Endothelial cell of umbilical vein (primary cell): ENCODE measurements at regions of chr1 and their contacts with region 1.

Region 1: DNA sequence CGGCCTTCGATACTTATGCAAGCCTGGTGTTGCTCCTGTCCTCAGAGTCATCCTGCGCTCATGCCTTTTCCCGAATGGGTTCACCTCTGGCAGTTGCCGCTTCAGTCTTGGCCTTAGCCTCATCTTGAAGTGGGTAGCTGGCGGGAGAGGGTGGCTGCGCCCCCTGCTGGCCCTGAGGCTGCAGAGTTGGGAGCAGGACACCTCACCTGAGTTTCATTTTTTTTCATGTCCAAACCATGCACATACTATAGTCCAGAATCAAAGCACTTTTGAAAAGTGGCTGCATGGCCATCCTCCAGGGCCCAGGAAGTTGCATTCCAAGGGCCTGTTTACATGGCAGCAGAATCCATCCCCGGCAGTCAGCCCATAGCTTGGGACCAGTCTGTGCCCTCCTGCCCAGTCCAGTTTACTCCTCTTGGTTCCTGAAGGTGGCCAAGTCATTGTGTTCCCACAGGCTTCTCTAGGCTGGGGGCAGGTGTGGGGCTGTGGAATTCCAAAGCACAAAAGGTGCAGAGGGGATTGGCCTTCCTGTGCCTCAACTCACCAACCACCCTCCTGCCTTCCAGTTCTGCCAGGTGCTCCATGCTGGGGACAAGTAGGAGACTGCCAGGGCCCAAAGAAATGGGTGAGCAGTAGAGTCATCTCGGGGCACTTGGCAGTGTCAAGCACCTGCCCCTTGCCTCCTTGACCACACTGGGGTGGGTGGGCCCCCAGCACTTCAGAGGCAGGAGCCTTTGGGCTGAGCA is 44.0 kb downstream of the YARS1 start:
- DNase-seq: peak; percentile 66
- H3K4me3 ChIP-seq: no peak overlapping the region
- H3K27ac ChIP-seq: no peak overlapping the region
- H3K4me1 ChIP-seq: peaks cover 21% of the 10 kb centered on the region
- H3K27me3 ChIP-seq: no peaks in the 10 kb centered on the region
- CTCF ChIP-seq: peak; percentile 92 to 95
- POLR2A ChIP-seq: no peak

Region 2: DNA sequence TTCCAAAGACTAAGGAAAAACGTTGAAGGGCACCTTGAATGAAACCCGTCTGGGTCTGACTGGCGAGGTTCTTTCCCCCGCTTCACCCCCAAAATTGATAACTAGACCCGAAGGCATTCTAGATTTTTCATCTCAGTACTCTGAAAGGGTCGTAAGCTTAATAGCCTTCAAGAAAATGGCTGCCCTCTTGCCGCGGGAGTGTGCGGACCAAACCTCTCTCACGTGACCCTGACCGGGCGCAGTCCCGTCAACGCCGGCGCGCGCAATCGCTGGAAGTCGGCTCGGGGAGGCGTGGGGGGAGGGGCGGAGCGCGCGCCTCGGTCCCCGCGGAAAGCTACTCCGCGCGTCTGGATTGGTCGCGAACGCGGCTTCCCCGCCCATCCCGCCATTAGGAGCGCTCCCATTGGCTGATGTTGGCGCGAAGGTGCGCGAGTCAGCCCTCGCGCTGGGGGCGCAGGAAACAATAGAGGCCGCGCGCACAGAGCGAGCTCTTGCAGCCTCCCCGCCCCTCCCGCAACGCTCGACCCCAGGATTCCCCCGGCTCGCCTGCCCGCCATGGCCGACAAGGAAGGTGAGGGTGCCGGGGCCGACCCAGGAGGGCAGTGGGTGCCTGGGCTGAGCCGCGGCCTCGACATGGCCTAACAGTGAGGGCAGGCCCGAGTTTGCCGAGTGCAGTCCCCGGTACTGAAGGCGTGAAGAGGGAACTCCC is 122.3 kb before region 1 on chr1 and contains the start of gene RBBP4:
- CTCF ChIA-PET with region 1: interaction called, 3 read pairs
- POLR2A ChIA-PET with region 1: interaction called, 12 read pairs
- dilution Hi-C with region 1: no loop called
- intact Hi-C with region 1: loop called (anchors 2 kb)
- DNase-seq: peak; percentile 98
- H3K4me3 ChIP-seq: peak within 1 kb of the TSS; percentile 65 to 90 (median 68)
- H3K27ac ChIP-seq: peak within 1 kb of the TSS; percentile 95
- H3K4me1 ChIP-seq: peaks cover 18% of the 10 kb centered on the region
- H3K27me3 ChIP-seq: no peaks in the 10 kb centered on the region
- CTCF ChIP-seq: no peak
- POLR2A ChIP-seq: peak; percentile 85
- total RNA-seq, gene RBBP4: 228 and 241 TPM in 2 replicates

Region 3: GRCh38 chr1:32702599-32703478 is 70.4 kb before region 1 on chr1 and contains the start of gene SYNC:
- CTCF ChIA-PET with region 1: interaction called, 21 read pairs
- POLR2A ChIA-PET with region 1: no interaction called
- dilution Hi-C with region 1: no loop called
- intact Hi-C with region 1: no loop called
- DNase-seq: no peak
- H3K4me3 ChIP-seq: peak within 1 kb of the TSS; percentile 63 to 81 (median 75)
- H3K27ac ChIP-seq: no peak within 1 kb of the TSS
- H3K4me1 ChIP-seq: peaks cover 11% of the 10 kb centered on the region
- H3K27me3 ChIP-seq: no peaks in the 10 kb centered on the region
- CTCF ChIP-seq: no peak
- POLR2A ChIP-seq: peak; percentile 47
- total RNA-seq, gene SYNC: 6.5 and 9.4 TPM in 2 replicates

Region 4: GRCh38 chr1:32741413-32742198 is 31.6 kb before region 1 on chr1:
- CTCF ChIA-PET with region 1: interaction called, 12 read pairs
- POLR2A ChIA-PET with region 1: interaction called, 3 read pairs
- dilution Hi-C with region 1: no loop called
- intact Hi-C with region 1: loop called (anchors 2 kb)
- DNase-seq: no peak
- H3K4me3 ChIP-seq: peak overlapping the region; percentile 63 to 78 (median 64)
- H3K27ac ChIP-seq: no peak overlapping the region
- H3K4me1 ChIP-seq: peaks cover 16% of the 10 kb centered on the region
- H3K27me3 ChIP-seq: no peaks in the 10 kb centered on the region
- CTCF ChIP-seq: peak; percentile 46 to 56
- POLR2A ChIP-seq: no peak

Region 5: GRCh38 chr1:32761253-32761880 is 11.8 kb before region 1 on chr1:
- CTCF ChIA-PET with region 1: interaction called, 24 read pairs
- POLR2A ChIA-PET with region 1: no interaction called
- dilution Hi-C with region 1: no loop called
- intact Hi-C with region 1: no loop called
- DNase-seq: peak; percentile 75
- H3K4me3 ChIP-seq: no peak overlapping the region
- H3K27ac ChIP-seq: no peak overlapping the region
- H3K4me1 ChIP-seq: no peaks in the 10 kb centered on the region
- H3K27me3 ChIP-seq: no peaks in the 10 kb centered on the region
- CTCF ChIP-seq: no peak
- POLR2A ChIP-seq: no peak

Region 6: DNA sequence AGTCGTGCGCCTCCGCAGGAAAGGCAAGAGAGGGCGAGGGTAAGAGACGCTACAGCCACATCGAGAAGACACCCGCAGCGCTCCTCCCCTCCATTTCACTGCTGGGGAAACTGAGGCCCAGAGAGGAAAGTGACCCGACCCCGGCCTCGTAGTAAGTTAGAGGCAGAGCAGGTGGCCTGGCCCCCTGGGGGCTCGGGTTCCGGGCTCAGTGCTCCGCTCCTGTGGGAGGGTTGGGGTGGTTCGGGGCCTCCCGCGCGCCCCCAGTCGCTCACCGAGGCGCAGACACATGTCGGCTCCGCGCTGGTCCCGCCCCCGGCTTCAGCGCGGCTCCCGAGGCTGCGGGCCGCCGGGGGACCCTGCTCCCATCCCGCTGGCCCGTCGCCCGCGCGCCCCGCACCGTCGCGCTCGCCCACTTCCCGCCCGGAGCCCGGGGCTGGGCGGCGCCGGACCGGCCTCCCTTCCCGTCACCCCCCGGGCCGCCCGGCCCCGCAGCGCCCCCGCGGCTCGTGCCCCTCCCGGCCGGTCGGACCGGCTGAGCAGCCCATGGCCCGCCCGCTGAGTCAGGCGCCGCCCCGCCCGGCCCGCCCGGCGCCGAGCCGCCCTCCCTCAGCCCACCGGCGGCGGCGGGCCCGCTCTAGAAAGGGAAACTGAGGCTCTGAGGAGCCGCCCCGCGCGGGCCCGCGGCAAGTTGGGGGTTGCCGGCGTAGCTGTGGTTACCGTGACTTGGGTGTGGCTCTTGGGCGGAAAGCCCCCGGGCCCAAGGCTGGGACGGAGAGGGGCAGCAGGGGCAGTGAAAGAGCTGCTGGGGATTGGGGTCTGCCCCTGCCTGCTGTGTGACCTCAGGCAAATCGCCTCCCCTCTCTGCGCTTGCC is 128.0 kb after region 1 on chr1 and contains the start of gene TMEM54:
- CTCF ChIA-PET with region 1: no interaction called
- POLR2A ChIA-PET with region 1: no interaction called
- dilution Hi-C with region 1: no loop called
- intact Hi-C with region 1: no loop called
- DNase-seq: no peak
- H3K4me3 ChIP-seq: peak within 1 kb of the TSS; percentile 43 to 62 (median 50)
- H3K27ac ChIP-seq: no peak within 1 kb of the TSS
- H3K4me1 ChIP-seq: peaks cover 13% of the 10 kb centered on the region
- H3K27me3 ChIP-seq: peaks cover 0 to 3% of the 10 kb centered on the region in 2 experiments
- CTCF ChIP-seq: peak in 1 of 2 donors; percentile 6
- POLR2A ChIP-seq: peak; percentile 32
- total RNA-seq, gene TMEM54: 14.8 and 23.6 TPM in 2 replicates